Prostate gland (tissue), 2 donors: ENCODE measurements at regions of chr7 and their contacts with region 1.

Region 1: GRCh38 chr7:130896898-130897514 is 163.0 kb upstream of the KLF14 start:
- DNase-seq: no peak
- H3K4me3 ChIP-seq: no peak overlapping the region
- H3K27ac ChIP-seq: peak overlapping the region; percentile 31 to 33
- H3K4me1 ChIP-seq: peaks cover 17% of the 10 kb centered on the region
- H3K27me3 ChIP-seq: no peaks in the 10 kb centered on the region
- CTCF ChIP-seq: peak; percentile 79 to 91 (median 88)
- POLR2A ChIP-seq: no peak

Region 2: GRCh38 chr7:131011976-131012375 is 115.0 kb after region 1 on chr7:
- intact Hi-C with region 1: loop called (anchors 5 kb)
- DNase-seq: no peak
- H3K4me3 ChIP-seq: no peak overlapping the region
- H3K27ac ChIP-seq: peak overlapping the region in 1 of 2 donors; percentile 41
- H3K4me1 ChIP-seq: peaks cover 23% of the 10 kb centered on the region
- H3K27me3 ChIP-seq: no peaks in the 10 kb centered on the region
- CTCF ChIP-seq: no peak
- POLR2A ChIP-seq: no peak

Region 3: DNA sequence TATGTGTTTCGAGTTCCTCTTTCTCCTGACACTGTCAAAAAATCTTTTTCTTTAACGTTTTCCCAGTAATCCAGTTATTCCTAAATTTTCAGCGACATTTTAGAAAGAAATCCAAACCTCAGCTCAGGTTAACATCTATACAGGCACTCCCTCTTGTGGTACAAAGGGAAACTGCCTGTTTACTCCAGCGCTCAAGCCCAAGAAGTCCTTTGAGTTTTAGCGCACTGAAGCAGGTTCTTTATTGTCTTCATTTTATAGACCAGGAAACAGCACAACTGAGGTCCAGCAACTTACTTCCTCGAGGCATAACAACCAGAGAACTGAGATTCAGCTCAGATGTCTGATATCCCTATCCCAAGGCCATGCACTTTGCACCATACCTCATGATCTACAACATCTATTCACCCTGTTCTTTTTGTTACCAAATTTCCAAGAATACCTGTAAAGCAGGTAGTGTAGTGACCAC is 143.5 kb after region 1 on chr7:
- intact Hi-C with region 1: loop called (anchors 5 kb)
- DNase-seq: peak; percentile 68
- H3K4me3 ChIP-seq: no peak overlapping the region
- H3K27ac ChIP-seq: peak overlapping the region; percentile 6 to 9
- H3K4me1 ChIP-seq: no peaks in the 10 kb centered on the region
- H3K27me3 ChIP-seq: no peaks in the 10 kb centered on the region
- CTCF ChIP-seq: peak; percentile 82 to 91 (median 88)
- POLR2A ChIP-seq: no peak

Region 4: DNA sequence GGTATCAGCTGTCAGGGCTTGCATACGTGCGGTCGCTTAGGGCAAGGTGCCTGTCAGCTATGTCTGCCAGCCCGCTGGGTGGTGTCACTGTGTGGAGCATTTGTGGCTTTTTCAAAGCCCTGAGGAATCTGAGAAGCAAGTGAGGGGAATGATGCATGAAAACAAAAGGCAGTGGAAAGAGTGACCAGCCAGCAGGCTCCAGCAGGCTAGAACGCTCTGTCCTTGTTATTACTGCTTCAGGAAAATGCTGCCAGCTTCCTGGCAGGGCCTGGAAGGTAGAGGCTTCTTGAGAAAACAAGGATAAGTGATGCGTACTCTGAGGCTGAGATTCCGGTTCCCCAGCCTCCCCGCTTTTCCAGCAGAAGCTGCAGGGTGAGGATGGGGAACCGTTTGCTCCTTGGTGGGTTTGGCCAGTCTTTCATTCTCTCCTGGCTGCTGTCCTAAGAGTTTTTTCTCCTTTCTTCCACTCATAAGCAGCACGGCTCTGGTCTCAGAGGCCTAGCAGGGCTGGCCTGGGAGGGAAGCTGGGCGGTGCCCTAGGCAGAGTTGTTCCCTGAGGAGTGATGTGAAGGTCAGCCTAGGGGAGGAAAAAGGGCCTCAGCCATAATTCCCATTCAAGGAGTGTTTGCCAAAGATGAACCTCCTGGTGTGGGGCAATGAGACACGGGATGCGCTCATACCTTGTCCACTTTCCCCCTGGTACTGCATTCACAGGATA is 387.9 kb after region 1 on chr7:
- intact Hi-C with region 1: loop called (anchors 5 kb)
- DNase-seq: peak; percentile 94
- H3K4me3 ChIP-seq: no peak overlapping the region
- H3K27ac ChIP-seq: peak overlapping the region; percentile 93 to 94
- H3K4me1 ChIP-seq: peaks cover 21% of the 10 kb centered on the region
- H3K27me3 ChIP-seq: no peaks in the 10 kb centered on the region
- CTCF ChIP-seq: peak in 2 of 4 experiments; percentile 8 to 13
- POLR2A ChIP-seq: peak; percentile 17

Region 5: DNA sequence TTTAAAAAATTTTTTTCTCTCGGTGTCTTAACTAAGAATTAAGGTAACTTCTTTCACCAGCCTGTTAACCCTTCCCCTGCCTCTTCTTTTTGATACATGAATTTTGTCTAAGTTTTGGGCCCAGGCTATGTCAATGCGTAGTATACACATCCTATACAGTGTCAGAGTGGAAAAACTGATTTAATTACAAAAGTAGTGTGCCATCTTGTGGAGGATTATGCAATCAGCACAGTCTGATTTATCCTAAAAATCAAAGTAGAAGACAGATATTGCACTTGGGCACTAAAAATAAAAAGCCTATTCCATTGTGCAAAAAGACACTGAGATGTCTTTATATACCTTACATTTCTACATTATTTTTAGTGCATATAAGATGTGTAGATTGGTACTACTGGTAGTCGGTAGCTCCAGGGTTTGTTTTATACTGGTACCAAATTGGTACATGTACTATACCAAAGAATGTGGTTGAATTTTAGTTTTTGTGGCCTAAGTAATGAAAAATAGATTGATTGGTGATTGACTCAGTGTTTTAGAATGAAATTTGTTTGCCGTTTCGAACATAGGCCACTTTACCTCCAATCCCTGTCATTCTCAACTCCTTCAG is 527.3 kb after region 1 on chr7:
- intact Hi-C with region 1: loop called (anchors 10 kb)
- DNase-seq: no peak
- H3K4me3 ChIP-seq: no peak overlapping the region
- H3K27ac ChIP-seq: peak overlapping the region; percentile 29 to 45
- H3K4me1 ChIP-seq: no peaks in the 10 kb centered on the region
- H3K27me3 ChIP-seq: no peaks in the 10 kb centered on the region
- CTCF ChIP-seq: peak in 3 of 4 experiments; percentile 46 to 79 (median 69)
- POLR2A ChIP-seq: no peak